T-cell (primary cell): ENCODE measurements at regions of chr1 and their contacts with region 1.

Region 1: DNA sequence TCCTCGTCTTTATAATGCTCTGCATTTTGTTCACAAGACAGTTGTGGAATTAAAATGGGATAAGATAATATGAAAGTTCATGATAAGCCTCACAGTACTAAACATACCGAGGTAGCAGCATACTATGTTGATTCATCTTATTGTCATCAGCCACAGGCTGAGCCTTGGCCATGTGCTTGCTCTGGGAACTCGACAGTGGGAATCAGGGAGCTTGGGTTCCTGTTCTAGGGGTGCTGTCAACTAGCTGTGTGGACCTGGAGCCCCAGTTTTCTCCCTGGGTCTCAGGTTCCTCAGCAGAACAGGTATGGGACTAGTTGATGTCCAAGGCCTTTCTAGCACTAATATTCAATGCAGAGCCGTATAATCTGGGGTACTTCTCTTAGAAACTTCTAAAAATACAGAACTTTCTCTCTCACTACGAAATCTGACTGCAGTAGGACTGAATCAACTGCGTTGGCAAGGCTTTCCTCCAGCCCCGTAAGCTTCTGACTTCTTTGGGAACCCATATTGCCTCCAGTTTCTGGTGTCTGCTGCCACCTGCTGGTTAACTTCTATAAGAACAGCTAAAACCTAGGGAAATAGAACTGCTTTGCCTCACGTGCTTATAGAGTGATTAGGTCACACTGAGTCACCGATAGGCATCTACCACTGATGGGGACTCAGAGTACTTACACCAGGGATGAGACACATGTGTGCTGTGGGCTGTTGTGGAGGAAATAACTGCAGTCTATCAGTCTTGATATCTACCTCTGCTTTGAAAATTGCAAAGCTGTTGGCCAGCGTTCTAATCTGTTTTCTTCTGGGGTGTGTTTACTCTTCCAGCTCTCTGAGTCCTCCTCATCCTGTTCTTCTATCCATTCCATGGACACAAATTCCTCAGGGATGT is 110.9 kb downstream of the RGL1 start:
- DNase-seq: peak; percentile 22 to 88 (median 57)
- ATAC-seq: peak; percentile 91 to 98 (median 97)
- H3K4me3 ChIP-seq: no peak overlapping the region
- H3K4me3 Mint-ChIP-seq: no peak overlapping the region
- H3K27ac ChIP-seq: no peak overlapping the region
- H3K27ac Mint-ChIP-seq: peak overlapping the region; percentile 71 to 81
- H3K4me1 ChIP-seq: peaks cover 2 to 8% of the 10 kb centered on the region in 2 experiments
- H3K4me1 Mint-ChIP-seq: peaks cover 11 to 13% (median 12%) of the 10 kb centered on the region in 3 donors
- H3K27me3 ChIP-seq: no peaks in the 10 kb centered on the region
- H3K27me3 Mint-ChIP-seq: no peaks in the 10 kb centered on the region

Region 2: DNA sequence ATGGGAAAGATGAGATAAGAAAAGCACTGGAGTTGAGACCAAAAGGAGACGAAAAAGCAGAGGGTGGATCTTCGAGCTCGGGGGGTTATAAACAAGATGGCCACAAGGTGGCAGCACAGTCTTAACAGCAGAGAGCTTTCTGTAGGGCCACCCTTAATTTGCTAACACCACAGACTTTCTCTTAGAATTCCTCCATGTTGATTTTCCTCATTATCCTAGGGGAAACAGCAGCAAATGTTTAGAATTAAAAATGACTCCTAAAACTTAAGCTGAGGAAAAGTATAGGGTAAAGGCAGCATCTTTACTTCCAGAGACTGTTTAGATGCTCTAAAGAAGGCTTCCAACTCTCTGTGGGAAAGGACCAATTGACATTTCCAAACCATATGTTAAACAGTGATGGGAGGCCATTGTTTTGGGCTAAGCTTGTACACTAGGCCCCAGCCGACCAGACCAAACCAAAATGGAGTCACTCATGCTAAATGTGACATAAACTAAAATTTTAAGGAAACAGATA is 260.2 kb before region 1 on chr1:
- CTCF ChIA-PET with region 1: interaction called, 79 to 144 read pairs
- POLR2A ChIA-PET with region 1: interaction called in 1 of 2 experiments, 3 read pairs
- DNase-seq: peak; percentile 16 to 87 (median 61)
- ATAC-seq: peak; percentile 62 to 78 (median 74)
- H3K4me3 ChIP-seq: no peak overlapping the region
- H3K4me3 Mint-ChIP-seq: no peak overlapping the region
- H3K27ac ChIP-seq: no peak overlapping the region
- H3K27ac Mint-ChIP-seq: peak overlapping the region in 1 of 2 donors; percentile 45
- H3K4me1 ChIP-seq: peaks cover 13 to 25% of the 10 kb centered on the region in 2 experiments
- H3K4me1 Mint-ChIP-seq: peaks cover 35 to 38% (median 36%) of the 10 kb centered on the region in 3 donors
- H3K27me3 ChIP-seq: no peaks in the 10 kb centered on the region
- H3K27me3 Mint-ChIP-seq: peaks cover 0 to under 1% of the 10 kb centered on the region in 2 donors

Region 3: DNA sequence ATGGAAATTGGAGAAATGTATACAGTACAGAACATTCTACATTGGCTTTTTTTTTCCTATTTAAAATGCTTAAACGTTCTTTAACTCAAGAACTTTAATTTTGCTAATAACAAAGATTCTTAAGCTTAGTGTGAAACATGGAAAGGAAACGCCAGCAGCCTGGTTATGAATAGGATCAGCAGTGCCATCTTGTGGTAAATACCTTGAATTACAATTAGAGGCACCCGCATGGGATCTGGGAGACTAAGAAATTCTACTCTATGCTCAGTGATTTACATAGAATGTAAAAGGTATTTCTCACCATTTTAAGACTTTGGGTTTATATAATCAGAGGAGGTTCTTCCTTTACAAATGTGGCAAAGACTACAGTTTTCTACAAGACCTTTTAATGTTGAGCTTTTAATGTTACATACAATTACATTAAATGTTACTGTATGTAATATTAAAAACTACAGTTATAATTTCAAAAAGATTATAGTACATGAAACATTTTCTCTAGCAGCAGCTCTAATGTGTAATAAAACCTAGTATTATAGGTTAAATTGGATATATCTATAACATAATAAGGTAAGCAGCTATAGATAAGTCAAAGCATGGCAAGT is 230.7 kb before region 1 on chr1:
- CTCF ChIA-PET with region 1: interaction called, 15 to 22 read pairs
- POLR2A ChIA-PET with region 1: no interaction called
- DNase-seq: peak in 10 of 35 experiments; percentile 4 to 72 (median 16)
- ATAC-seq: peak; percentile 56 to 63 (median 58)
- H3K4me3 ChIP-seq: no peak overlapping the region
- H3K4me3 Mint-ChIP-seq: no peak overlapping the region
- H3K27ac ChIP-seq: no peak overlapping the region
- H3K27ac Mint-ChIP-seq: no peak overlapping the region
- H3K4me1 ChIP-seq: no peaks in the 10 kb centered on the region
- H3K4me1 Mint-ChIP-seq: no peaks in the 10 kb centered on the region
- H3K27me3 ChIP-seq: peaks cover 0 to 8% of the 10 kb centered on the region in 2 experiments
- H3K27me3 Mint-ChIP-seq: peaks cover 0 to 10% of the 10 kb centered on the region in 2 donors

Region 4: GRCh38 chr1:183905508-183906113 is 10.3 kb before region 1 on chr1:
- CTCF ChIA-PET with region 1: interaction called, 5 to 12 read pairs
- POLR2A ChIA-PET with region 1: interaction called in 1 of 2 experiments, 3 read pairs
- DNase-seq: no peak
- ATAC-seq: no peak
- H3K4me3 ChIP-seq: no peak overlapping the region
- H3K4me3 Mint-ChIP-seq: no peak overlapping the region
- H3K27ac ChIP-seq: no peak overlapping the region
- H3K27ac Mint-ChIP-seq: no peak overlapping the region
- H3K4me1 ChIP-seq: no peaks in the 10 kb centered on the region
- H3K4me1 Mint-ChIP-seq: peaks cover 0 to 5% (median 0%) of the 10 kb centered on the region in 3 donors
- H3K27me3 ChIP-seq: no peaks in the 10 kb centered on the region
- H3K27me3 Mint-ChIP-seq: no peaks in the 10 kb centered on the region

Region 5: DNA sequence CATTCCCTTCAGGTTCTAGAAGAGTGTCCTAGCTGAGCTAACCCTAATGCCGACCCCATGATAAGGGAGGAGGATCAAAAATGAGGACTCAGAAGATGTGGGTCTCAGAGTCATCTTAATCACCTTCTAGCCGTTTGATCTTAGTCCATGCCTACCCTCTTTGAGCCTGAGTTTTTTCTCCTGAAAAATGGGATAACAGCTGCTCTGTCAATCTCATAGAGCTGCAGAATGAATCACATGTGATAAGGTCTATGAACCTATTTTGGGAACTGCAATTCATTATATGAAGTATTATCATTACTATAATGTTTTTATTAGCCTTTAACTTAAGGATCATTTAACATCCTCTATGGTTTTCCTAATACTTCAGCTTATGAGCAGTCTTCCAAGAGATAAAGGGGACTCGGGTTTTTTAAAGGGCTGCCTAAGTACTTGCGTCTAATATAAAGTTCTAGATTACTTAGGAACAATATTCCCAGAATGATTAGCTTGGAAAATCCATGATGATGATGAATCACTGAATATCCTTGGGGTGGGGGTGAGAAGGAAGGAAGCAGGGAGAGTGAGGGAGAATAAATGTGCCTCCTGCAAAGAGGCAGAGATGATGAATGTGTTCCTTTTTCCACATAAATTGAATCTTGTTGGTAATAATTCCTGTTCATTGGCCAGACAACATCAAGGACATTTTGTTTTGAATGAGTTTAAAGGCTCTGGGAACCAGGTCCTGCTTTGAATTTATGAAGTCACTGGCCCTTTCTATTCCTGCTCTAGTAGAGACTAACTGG is 54.8 kb after region 1 on chr1:
- CTCF ChIA-PET with region 1: interaction called in 1 of 2 experiments, 15 read pairs
- POLR2A ChIA-PET with region 1: no interaction called
- DNase-seq: no peak
- ATAC-seq: no peak
- H3K4me3 ChIP-seq: no peak overlapping the region
- H3K4me3 Mint-ChIP-seq: no peak overlapping the region
- H3K27ac ChIP-seq: no peak overlapping the region
- H3K27ac Mint-ChIP-seq: no peak overlapping the region
- H3K4me1 ChIP-seq: peaks cover 0 to 18% of the 10 kb centered on the region in 2 experiments
- H3K4me1 Mint-ChIP-seq: peaks cover 0 to 19% (median 10%) of the 10 kb centered on the region in 3 donors
- H3K27me3 ChIP-seq: no peaks in the 10 kb centered on the region
- H3K27me3 Mint-ChIP-seq: peaks cover 0 to 2% of the 10 kb centered on the region in 2 donors